ENCODE measurements at regions of chr5 and their contacts with region 1.

Region 1: GRCh38 chr5:43313035-43313853 is at the start of gene HMGCS1:
- DNase-seq: peak; percentile 99
- ATAC-seq: peak; percentile 90
- H3K4me3 Mint-ChIP-seq: peak within 1 kb of the TSS; percentile 93
- H3K27ac Mint-ChIP-seq: peak within 1 kb of the TSS; percentile 96
- H3K4me1 Mint-ChIP-seq: peaks cover 71% of the 10 kb centered on the region
- H3K27me3 Mint-ChIP-seq: no peaks in the 10 kb centered on the region
- total RNA-seq, gene HMGCS1: 95.2 to 102 TPM

Region 2: GRCh38 chr5:41903892-41904799 is 1409.1 kb before region 1 on chr5 and contains the start of gene RIMOC1:
- CTCF ChIA-PET with region 1: no interaction called
- POLR2A ChIA-PET with region 1: no interaction called
- intact Hi-C with region 1: loop called in 1 of 2 experiments (anchors 5 kb)
- DNase-seq: peak; percentile 98
- ATAC-seq: peak; percentile 97
- H3K4me3 Mint-ChIP-seq: peak within 1 kb of the TSS; percentile 91
- H3K27ac Mint-ChIP-seq: peak within 1 kb of the TSS; percentile 98
- H3K4me1 Mint-ChIP-seq: peaks cover 47% of the 10 kb centered on the region
- H3K27me3 Mint-ChIP-seq: no peaks in the 10 kb centered on the region
- total RNA-seq, gene RIMOC1: 25.4 to 26.7 TPM

Region 3: GRCh38 chr5:43019614-43020293 is 293.5 kb before region 1 on chr5:
- CTCF ChIA-PET with region 1: no interaction called
- POLR2A ChIA-PET with region 1: interaction called, 3 read pairs
- intact Hi-C with region 1: loop called in 1 of 2 experiments (anchors 2 kb)
- DNase-seq: peak; percentile 91
- ATAC-seq: peak; percentile 70
- H3K4me3 Mint-ChIP-seq: peak overlapping the region; percentile 94
- H3K27ac Mint-ChIP-seq: peak overlapping the region; percentile 99
- H3K4me1 Mint-ChIP-seq: peaks cover 33% of the 10 kb centered on the region
- H3K27me3 Mint-ChIP-seq: no peaks in the 10 kb centered on the region

Region 4: DNA sequence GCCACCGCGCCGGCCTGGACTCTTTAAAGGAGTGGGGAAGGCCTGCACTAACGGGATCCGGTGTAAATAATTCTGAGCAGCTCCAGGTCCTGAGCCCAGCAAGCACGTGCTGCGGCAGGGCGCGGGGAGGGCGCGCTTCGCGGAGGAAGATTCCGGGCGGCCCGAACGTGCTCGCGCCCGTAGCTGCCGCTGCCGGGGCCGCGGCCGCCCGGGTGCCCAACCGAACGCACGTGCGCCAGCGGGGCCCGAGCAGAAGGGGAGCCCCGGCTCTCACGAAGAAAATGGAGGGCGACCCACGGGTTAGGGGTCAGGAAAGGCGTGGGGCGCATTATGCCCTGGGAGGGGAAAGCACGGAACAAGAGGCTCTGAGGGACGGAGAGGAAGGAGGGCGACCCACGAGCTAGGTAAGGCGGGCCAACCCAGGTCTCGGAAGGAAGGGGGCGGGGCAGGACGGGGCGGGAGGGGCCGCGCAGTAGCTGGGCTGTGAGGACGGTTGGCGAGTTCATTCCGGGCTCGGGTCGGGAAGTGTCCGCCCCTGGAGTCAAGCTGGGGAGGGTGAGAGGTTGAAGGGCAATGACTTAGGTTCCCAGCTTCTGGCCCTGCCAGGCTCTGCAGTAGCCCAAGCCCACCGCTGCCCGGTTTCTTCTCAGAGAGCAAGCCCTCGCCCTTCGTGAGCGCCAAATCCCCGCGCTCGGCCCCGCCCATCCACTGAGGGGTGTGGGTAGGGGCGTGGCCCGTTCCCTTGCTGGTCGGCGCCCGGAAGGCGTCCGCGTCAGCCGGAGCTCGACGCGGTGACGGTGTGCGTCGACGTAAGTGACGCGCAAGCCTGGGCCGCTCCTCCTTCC is 192.3 kb before region 1 on chr5 and contains the start of gene ZNF131:
- CTCF ChIA-PET with region 1: interaction called, 4 read pairs
- POLR2A ChIA-PET with region 1: interaction called, 22 read pairs
- intact Hi-C with region 1: loop called (anchors 1 kb)
- DNase-seq: peak; percentile 98
- ATAC-seq: peak; percentile 93
- H3K4me3 Mint-ChIP-seq: peak within 1 kb of the TSS; percentile 94
- H3K27ac Mint-ChIP-seq: peak within 1 kb of the TSS; percentile 94
- H3K4me1 Mint-ChIP-seq: peaks cover 35% of the 10 kb centered on the region
- H3K27me3 Mint-ChIP-seq: no peaks in the 10 kb centered on the region
- total RNA-seq, gene ZNF131: 30.9 to 33.4 TPM

Region 5: GRCh38 chr5:43389679-43390329 is 76.6 kb after region 1 on chr5:
- CTCF ChIA-PET with region 1: interaction called, 17 read pairs
- POLR2A ChIA-PET with region 1: no interaction called
- intact Hi-C with region 1: loop called in 1 of 2 experiments (anchors 2 kb)
- DNase-seq: peak; percentile 63
- ATAC-seq: peak; percentile 85
- H3K4me3 Mint-ChIP-seq: no peak overlapping the region
- H3K27ac Mint-ChIP-seq: no peak overlapping the region
- H3K4me1 Mint-ChIP-seq: peaks cover 32% of the 10 kb centered on the region
- H3K27me3 Mint-ChIP-seq: no peaks in the 10 kb centered on the region

Region 6: DNA sequence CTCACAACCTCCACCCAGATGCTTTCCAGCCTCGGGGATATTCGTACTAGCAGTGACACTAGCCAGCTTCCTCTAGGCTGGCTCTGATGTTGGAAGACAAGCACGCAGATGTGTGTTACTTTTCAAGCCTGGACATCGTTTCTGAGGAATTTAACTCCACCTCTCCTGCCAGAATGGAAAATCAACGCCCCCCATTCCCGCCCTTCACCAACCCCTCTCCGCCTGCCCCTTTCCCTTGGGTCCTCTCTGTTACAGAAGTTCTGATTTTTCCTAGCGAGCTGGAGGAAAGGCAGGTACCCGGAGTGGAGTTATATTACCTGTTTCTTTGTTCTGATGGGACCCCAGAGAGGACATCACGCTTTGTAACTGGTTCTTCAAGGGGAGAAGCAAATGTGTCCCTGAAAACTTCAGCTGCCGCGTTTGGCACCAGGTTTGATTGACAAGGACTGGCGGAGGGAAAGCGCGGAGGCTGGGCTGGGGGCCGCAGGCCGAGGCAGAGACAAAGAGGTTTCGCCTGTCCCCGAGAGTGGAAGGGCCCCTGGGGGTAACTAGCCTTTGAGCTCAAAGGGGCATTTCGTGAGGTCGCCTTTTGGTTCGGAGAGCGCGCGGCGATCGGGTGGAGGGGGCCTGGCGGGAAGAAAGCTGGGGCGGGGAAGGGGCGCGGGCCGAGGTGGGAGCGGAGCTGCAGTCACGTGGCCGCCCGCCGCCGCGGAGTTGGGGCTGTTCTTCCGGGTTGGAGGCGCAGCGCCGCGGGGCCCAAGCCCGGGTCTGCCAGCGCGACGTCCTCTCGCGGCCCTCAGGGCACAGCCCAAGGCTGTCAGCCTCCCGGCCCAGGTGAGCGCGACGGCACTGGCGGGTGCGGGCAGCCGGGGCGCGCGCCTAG is 289.5 kb after region 1 on chr5 and contains the start of gene NNT:
- CTCF ChIA-PET with region 1: no interaction called
- POLR2A ChIA-PET with region 1: no interaction called
- intact Hi-C with region 1: loop called in 1 of 2 experiments (anchors 2 kb)
- DNase-seq: peak; percentile 89
- ATAC-seq: peak; percentile 76
- H3K4me3 Mint-ChIP-seq: peak within 1 kb of the TSS; percentile 95
- H3K27ac Mint-ChIP-seq: peak within 1 kb of the TSS; percentile 93
- H3K4me1 Mint-ChIP-seq: peaks cover 29% of the 10 kb centered on the region
- H3K27me3 Mint-ChIP-seq: no peaks in the 10 kb centered on the region
- total RNA-seq, gene NNT: 55.4 to 77.5 TPM

Measured in activated CD4-positive, alpha-beta T cell treated with anti-CD3 and anti-CD28 coated beads for 36 hours (primary cell).